ENCODE measurements at regions of chr1 and their contacts with region 1.

Region 1: GRCh38 chr1:181142096-181142958 is 53.8 kb downstream of the IER5 start:
- DNase-seq: peak; percentile 93
- H3K4me3 Mint-ChIP-seq: peak overlapping the region; percentile 10
- H3K27ac Mint-ChIP-seq: peak overlapping the region; percentile 55
- H3K4me1 Mint-ChIP-seq: peaks cover 40% of the 10 kb centered on the region
- H3K27me3 Mint-ChIP-seq: no peaks in the 10 kb centered on the region

Region 2: DNA sequence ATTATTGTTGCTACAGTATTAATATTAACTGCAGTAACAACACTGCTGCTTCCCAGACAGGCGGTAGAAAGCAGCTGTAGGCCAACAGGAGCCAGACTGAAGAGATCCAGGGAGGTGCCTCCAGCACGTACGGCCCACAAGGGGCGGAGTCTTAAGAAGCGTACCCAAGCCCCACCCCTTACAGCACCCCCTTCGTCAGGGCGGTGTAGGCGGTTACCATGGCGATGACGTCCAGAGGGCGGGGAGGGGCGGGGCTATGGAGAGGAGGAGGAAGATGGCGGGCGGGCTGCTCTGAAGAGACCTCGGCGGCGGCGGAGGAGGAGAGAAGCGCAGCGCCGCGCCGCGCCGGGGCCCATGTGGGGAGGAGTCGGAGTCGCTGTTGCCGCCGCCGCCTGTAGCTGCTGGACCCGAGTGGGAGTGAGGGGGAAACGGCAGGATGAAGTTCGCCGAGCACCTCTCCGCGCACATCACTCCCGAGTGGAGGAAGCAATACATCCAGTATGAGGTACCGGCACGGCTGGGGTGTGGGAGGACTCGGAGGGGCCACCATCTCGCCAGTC is 510.5 kb before region 1 on chr1 and contains the start of gene XPR1:
- CTCF ChIA-PET with region 1: interaction called, 6 read pairs
- intact Hi-C with region 1: loop called (anchors 5 kb)
- DNase-seq: peak; percentile 99
- H3K4me3 Mint-ChIP-seq: no peak within 1 kb of the TSS
- H3K27ac Mint-ChIP-seq: peak within 1 kb of the TSS; percentile 77
- H3K4me1 Mint-ChIP-seq: peaks cover 12% of the 10 kb centered on the region
- H3K27me3 Mint-ChIP-seq: no peaks in the 10 kb centered on the region
- total RNA-seq, gene XPR1: 14.8 to 18.1 TPM

Region 3: GRCh38 chr1:180849036-180849775 is 293.1 kb before region 1 on chr1:
- CTCF ChIA-PET with region 1: no interaction called
- intact Hi-C with region 1: no loop called
- DNase-seq: no peak
- H3K4me3 Mint-ChIP-seq: no peak overlapping the region
- H3K27ac Mint-ChIP-seq: no peak overlapping the region
- H3K4me1 Mint-ChIP-seq: peaks cover 21% of the 10 kb centered on the region
- H3K27me3 Mint-ChIP-seq: no peaks in the 10 kb centered on the region

Region 4: GRCh38 chr1:181014477-181015250 is 127.7 kb before region 1 on chr1:
- CTCF ChIA-PET with region 1: interaction called, 12 read pairs
- intact Hi-C with region 1: loop called (anchors 1 kb)
- DNase-seq: peak; percentile 33
- H3K4me3 Mint-ChIP-seq: no peak overlapping the region
- H3K27ac Mint-ChIP-seq: no peak overlapping the region
- H3K4me1 Mint-ChIP-seq: peaks cover 43% of the 10 kb centered on the region
- H3K27me3 Mint-ChIP-seq: no peaks in the 10 kb centered on the region

Region 5: DNA sequence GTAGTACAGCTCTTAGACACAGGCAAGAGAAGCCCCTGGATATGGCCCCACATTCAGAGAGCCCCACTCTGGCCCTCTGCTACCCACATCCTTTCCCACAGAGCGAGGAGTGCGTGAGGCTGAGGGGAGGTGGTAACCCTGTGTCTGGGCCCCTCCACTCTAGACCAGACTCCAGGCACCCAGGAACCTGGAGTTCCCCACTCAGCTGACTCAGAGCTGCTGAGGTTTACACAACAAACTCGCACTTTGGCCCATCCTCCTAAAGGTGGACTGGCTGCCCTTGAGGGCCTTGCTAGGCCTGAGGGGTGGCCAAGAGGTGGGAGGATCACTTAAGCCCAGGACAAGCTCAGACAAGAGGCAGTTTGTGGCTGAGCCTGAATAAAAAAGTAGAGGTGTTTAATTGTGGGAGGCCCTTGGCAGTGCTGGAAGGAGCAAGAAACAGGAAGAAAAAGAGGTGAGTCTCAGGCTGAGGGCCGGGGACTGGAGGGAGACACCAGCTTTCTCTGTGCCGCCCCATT is 97.8 kb before region 1 on chr1:
- CTCF ChIA-PET with region 1: interaction called, 158 read pairs
- intact Hi-C with region 1: loop called (anchors 1 kb)
- DNase-seq: peak; percentile 80
- H3K4me3 Mint-ChIP-seq: no peak overlapping the region
- H3K27ac Mint-ChIP-seq: peak overlapping the region; percentile 64
- H3K4me1 Mint-ChIP-seq: peaks cover 36% of the 10 kb centered on the region
- H3K27me3 Mint-ChIP-seq: no peaks in the 10 kb centered on the region

Region 6: DNA sequence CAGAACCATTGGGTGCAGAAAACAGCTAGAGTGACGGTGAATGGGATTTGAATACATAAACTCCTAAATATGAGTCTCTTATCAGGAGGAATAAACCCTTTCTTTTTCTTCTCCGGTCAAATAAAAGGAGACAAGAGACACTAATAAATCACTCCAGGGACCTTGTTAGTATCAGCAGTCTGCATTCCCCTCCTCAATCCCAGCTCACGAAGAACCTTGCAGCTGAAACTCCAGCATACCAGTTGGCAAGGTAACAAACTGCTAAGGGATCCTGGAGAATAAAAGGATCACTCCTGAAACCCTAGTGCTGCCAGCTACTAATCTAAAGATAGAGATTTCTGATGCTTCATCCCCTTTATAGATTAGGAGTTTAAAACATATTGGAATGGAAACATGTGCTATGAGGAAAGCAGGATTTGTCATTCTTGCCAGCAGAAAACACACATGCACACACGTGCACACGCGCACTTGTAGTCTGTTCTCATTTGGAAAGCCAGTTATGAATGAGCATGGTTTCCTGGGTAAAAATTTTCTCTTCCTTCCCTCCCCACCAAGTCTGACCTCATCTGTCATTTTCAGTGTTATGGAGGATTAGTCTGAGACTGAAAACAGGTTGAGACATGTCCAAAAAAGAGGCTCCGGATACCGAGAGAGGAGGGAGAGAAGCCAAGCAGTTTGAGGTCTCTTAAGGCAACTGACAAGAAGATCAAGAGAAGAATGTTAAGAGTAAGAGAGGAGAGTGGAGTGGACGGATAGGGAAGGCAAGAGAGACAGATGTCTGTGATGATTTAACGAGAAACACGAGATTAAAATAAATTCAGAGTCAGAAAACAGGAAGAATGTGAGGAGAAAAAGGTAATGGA is 42.9 kb before region 1 on chr1:
- CTCF ChIA-PET with region 1: interaction called, 66 read pairs
- intact Hi-C with region 1: loop called (anchors 1 kb)
- DNase-seq: peak; percentile 80
- H3K4me3 Mint-ChIP-seq: peak overlapping the region; percentile 67
- H3K27ac Mint-ChIP-seq: peak overlapping the region; percentile 99
- H3K4me1 Mint-ChIP-seq: peaks cover 88% of the 10 kb centered on the region
- H3K27me3 Mint-ChIP-seq: no peaks in the 10 kb centered on the region

Region 7: DNA sequence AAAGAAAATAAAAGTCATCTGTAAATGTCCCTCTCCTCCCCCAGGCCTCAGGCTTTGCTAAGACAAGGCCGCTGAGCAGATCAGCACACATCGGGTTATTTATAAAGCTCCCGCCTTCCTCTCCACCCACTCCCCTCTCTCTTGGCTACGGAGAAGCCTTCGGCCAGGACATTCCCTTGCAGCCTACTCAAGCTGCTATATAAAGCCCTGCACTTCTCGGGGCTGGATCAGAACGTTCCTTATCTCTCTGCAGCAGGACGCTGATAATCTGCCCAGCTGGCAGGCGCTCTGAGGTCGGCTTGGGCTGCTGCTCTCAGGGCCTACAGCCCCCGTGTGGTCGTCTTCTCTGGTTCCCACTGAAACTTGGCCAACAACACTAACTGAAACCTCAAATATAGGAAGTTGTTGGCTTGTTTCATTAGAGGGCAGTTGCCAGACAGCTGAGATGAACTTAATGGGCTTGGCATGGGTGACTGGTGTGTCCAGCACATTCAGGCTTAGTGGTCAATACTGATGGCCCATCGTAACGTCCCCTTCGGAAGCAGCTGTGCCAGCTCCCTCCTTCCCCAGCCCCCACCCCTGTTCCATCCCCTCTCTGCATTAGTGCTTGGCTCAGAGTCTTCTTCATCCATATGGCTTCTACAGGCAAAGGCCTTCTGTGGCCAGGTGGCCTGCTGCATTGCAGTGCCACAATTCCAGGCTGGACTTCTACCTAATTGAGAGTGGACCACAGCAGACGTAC is 10.7 kb after region 1 on chr1:
- CTCF ChIA-PET with region 1: interaction called, 140 read pairs
- intact Hi-C with region 1: loop called (anchors 1 kb)
- DNase-seq: no peak
- H3K4me3 Mint-ChIP-seq: no peak overlapping the region
- H3K27ac Mint-ChIP-seq: no peak overlapping the region
- H3K4me1 Mint-ChIP-seq: peaks cover 37% of the 10 kb centered on the region
- H3K27me3 Mint-ChIP-seq: no peaks in the 10 kb centered on the region

Region 8: DNA sequence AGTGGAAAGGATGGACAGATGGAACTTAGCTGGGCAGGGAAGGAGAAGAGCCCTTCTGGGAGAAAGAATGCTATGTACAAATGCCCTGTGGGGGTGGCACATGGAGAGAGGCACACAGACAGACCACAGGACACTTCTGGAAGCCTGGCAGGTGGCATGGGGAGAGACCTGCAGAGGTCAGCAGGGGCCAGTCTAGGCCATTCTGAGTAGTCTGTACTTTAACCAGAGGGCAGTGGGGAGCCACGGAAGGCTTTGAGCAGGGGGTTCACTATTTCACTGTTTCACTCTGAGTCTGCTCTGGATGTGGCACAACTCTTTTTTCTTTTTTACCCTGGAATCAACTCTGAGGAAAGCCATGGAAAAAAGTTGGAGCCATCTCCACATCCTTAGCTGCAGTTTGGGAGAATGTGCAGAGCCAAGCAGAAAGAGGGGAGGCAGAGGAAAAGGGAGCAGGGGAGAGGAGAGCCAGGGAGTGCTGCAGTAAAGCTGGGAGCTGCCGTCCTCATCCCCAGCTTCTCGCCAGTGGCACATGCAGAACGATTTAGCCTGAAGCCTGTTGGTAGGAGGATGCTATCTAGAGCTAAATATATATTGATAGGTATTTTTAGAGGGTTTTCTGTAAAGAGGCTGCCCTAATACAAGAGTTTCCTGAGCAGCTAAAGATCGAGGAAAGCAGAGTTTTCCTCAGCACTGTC is 375.0 kb after region 1 on chr1:
- CTCF ChIA-PET with region 1: no interaction called
- intact Hi-C with region 1: no loop called
- DNase-seq: no peak
- H3K4me3 Mint-ChIP-seq: no peak overlapping the region
- H3K27ac Mint-ChIP-seq: no peak overlapping the region
- H3K4me1 Mint-ChIP-seq: peaks cover 3% of the 10 kb centered on the region
- H3K27me3 Mint-ChIP-seq: peaks cover 3% of the 10 kb centered on the region

Measured in activated naive CD4-positive, alpha-beta T cell treated with anti-CD3 and anti-CD28 coated beads for 36 hours (primary cell).